Dendritic cell treated with granulocyte-macrophage colony-stimulating factor and Interleukin-4, amounts not matched to agents 40 ng/mL and 50 ng/mL, for 4 days (primary cell): ENCODE measurements at regions of chr11 and their contacts with region 1.

Region 1: GRCh38 chr11:129315781-129316481 is 59.7 kb upstream of the BARX2 start:
- H3K4me3 Mint-ChIP-seq: no peak overlapping the region
- H3K27ac Mint-ChIP-seq: peak overlapping the region; percentile 25
- H3K4me1 Mint-ChIP-seq: peaks cover 70% of the 10 kb centered on the region
- H3K27me3 Mint-ChIP-seq: peaks cover 19% of the 10 kb centered on the region

Region 2: GRCh38 chr11:129163714-129164164 is 152.2 kb before region 1 on chr11:
- intact Hi-C with region 1: no loop called
- H3K4me3 Mint-ChIP-seq: no peak overlapping the region
- H3K27ac Mint-ChIP-seq: no peak overlapping the region
- H3K4me1 Mint-ChIP-seq: no peaks in the 10 kb centered on the region
- H3K27me3 Mint-ChIP-seq: no peaks in the 10 kb centered on the region

Region 3: DNA sequence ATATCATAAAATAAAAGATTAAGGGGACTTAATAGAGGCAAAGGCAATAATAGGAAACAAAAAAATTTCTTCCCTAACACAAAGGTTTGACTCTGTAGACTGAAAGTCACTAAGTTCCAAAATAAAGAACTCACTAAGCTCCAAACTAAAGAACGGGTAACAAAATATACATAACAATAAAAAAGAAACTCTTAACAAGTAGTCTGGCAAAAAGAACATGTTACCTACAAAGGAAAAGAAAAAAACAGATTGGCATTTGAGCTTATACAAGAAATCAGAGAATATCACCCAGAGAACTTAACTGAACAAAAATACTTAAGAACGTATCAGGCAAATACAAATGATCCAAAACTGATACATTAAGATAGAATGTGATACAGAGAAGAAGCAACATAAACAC is 131.3 kb before region 1 on chr11:
- intact Hi-C with region 1: no loop called
- H3K4me3 Mint-ChIP-seq: no peak overlapping the region
- H3K27ac Mint-ChIP-seq: no peak overlapping the region
- H3K4me1 Mint-ChIP-seq: peaks cover 6% of the 10 kb centered on the region
- H3K27me3 Mint-ChIP-seq: no peaks in the 10 kb centered on the region

Region 4: GRCh38 chr11:129279326-129280026 is 36.5 kb before region 1 on chr11:
- intact Hi-C with region 1: loop called (anchors 5 kb)
- H3K4me3 Mint-ChIP-seq: peak overlapping the region; percentile 72
- H3K27ac Mint-ChIP-seq: peak overlapping the region; percentile 69
- H3K4me1 Mint-ChIP-seq: peaks cover 25% of the 10 kb centered on the region
- H3K27me3 Mint-ChIP-seq: peaks cover 34% of the 10 kb centered on the region